ENCODE measurements at regions of chr9 and their contacts with region 1.

Region 1: GRCh38 chr9:73200694-73201452 is 49.2 kb downstream of the ANXA1 start:
- DNase-seq: peak; percentile 22
- ATAC-seq: no peak
- H3K4me3 ChIP-seq: no peak overlapping the region
- H3K4me3 Mint-ChIP-seq: no peak overlapping the region
- H3K27ac ChIP-seq: no peak overlapping the region
- H3K27ac Mint-ChIP-seq: no peak overlapping the region
- H3K4me1 ChIP-seq: no peaks in the 10 kb centered on the region
- H3K4me1 Mint-ChIP-seq: no peaks in the 10 kb centered on the region
- H3K27me3 ChIP-seq: no peaks in the 10 kb centered on the region
- H3K27me3 Mint-ChIP-seq: peaks cover 3% of the 10 kb centered on the region
- CTCF ChIP-seq: peak; percentile 45

Region 2: GRCh38 chr9:73327149-73327548 is 126.3 kb after region 1 on chr9:
- CTCF ChIA-PET with region 1: no interaction called
- POLR2A ChIA-PET with region 1: no interaction called
- intact Hi-C with region 1: no loop called
- DNase-seq: no peak
- ATAC-seq: no peak
- H3K4me3 ChIP-seq: no peak overlapping the region
- H3K4me3 Mint-ChIP-seq: no peak overlapping the region
- H3K27ac ChIP-seq: no peak overlapping the region
- H3K27ac Mint-ChIP-seq: no peak overlapping the region
- H3K4me1 ChIP-seq: no peaks in the 10 kb centered on the region
- H3K4me1 Mint-ChIP-seq: no peaks in the 10 kb centered on the region
- H3K27me3 ChIP-seq: no peaks in the 10 kb centered on the region
- H3K27me3 Mint-ChIP-seq: no peaks in the 10 kb centered on the region
- CTCF ChIP-seq: no peak

Region 3: DNA sequence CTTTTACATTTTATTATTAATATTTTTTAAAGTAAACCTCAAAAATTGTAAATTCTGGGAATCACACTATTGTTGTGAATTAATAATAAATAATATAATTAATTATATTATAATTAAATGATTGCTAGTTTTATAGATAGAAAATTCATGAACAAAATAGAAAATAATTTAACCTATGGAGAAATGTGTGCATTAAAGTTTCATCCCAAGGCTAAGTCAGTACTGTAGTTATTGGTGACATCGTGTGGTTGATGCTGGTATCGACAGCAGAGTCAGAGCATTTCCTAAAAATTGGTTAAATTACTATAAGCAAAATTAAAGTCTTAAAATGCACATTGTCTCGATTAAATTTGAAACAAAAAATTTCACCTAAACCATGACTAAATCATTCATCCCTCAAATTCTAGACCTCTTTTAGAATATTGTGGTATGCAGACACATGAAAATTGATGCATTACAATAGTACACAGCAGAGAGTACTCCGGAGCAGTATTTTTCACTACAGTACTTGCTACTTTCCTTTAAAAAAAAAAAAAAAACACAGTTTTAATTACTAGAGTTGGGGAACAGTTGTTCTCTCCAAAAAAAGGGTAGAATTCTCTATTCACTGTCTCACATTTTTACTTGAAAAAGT is 1370.1 kb after region 1 on chr9:
- CTCF ChIA-PET with region 1: interaction called, 4 read pairs
- POLR2A ChIA-PET with region 1: no interaction called
- intact Hi-C with region 1: loop called (anchors 2 kb)
- DNase-seq: peak; percentile 23
- ATAC-seq: no peak
- H3K4me3 ChIP-seq: no peak overlapping the region
- H3K4me3 Mint-ChIP-seq: no peak overlapping the region
- H3K27ac ChIP-seq: no peak overlapping the region
- H3K27ac Mint-ChIP-seq: no peak overlapping the region
- H3K4me1 ChIP-seq: no peaks in the 10 kb centered on the region
- H3K4me1 Mint-ChIP-seq: no peaks in the 10 kb centered on the region
- H3K27me3 ChIP-seq: no peaks in the 10 kb centered on the region
- H3K27me3 Mint-ChIP-seq: peaks cover 11% of the 10 kb centered on the region
- CTCF ChIP-seq: peak; percentile 80

Region 4: GRCh38 chr9:74645007-74645639 is 1444.2 kb after region 1 on chr9:
- CTCF ChIA-PET with region 1: no interaction called
- POLR2A ChIA-PET with region 1: no interaction called
- intact Hi-C with region 1: loop called (anchors 2 kb)
- DNase-seq: peak; percentile 36
- ATAC-seq: no peak
- H3K4me3 ChIP-seq: no peak overlapping the region
- H3K4me3 Mint-ChIP-seq: no peak overlapping the region
- H3K27ac ChIP-seq: no peak overlapping the region
- H3K27ac Mint-ChIP-seq: no peak overlapping the region
- H3K4me1 ChIP-seq: no peaks in the 10 kb centered on the region
- H3K4me1 Mint-ChIP-seq: peaks cover 1% of the 10 kb centered on the region
- H3K27me3 ChIP-seq: no peaks in the 10 kb centered on the region
- H3K27me3 Mint-ChIP-seq: peaks cover 20% of the 10 kb centered on the region
- CTCF ChIP-seq: peak; percentile 66

Region 5: GRCh38 chr9:74742792-74743730 is 1542.2 kb after region 1 on chr9:
- CTCF ChIA-PET with region 1: no interaction called
- POLR2A ChIA-PET with region 1: no interaction called
- intact Hi-C with region 1: loop called (anchors 5 kb)
- DNase-seq: peak; percentile 25
- ATAC-seq: no peak
- H3K4me3 ChIP-seq: no peak overlapping the region
- H3K4me3 Mint-ChIP-seq: no peak overlapping the region
- H3K27ac ChIP-seq: no peak overlapping the region
- H3K27ac Mint-ChIP-seq: no peak overlapping the region
- H3K4me1 ChIP-seq: no peaks in the 10 kb centered on the region
- H3K4me1 Mint-ChIP-seq: no peaks in the 10 kb centered on the region
- H3K27me3 ChIP-seq: peaks cover 0 to 13% (median 8%) of the 10 kb centered on the region in 4 experiments
- H3K27me3 Mint-ChIP-seq: peaks cover 51% of the 10 kb centered on the region
- CTCF ChIP-seq: peak; percentile 60